ENCODE measurements at regions of chr1 and their contacts with region 1.

Region 1: DNA sequence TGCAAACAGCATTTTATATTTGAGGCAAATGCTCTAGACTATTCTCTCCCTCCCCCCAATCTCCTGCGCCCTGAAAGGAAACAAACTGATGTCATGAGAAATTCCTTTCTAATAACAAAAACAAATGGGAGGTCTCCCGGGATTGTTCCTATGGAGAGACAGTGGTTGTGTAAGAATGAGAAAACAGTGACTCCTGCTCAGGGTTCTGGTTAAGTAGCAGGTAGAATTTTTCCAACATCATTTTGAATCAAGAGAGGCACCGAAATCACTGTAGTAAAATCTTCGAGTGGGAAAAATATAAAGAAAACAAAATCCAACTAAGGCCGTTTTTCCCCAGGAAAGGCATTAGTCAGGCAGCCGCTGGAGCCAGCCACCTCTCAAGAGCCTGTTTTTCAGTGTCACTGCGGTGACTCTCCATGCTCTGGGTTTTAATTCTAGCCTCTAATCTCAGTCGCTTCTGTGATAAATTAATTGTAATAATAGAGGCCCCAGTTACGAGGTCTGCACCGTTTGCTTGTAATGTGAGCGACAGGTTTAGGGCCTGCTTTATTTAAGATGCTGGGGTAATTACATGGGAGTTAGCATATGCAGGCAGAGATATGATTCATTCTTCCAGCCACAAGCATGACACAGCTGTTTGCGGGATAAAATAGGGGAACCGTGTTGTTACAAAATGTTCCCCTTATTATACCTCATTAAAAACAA is 80.3 kb downstream of the RNF220 start:
- DNase-seq: no peak

Region 2: DNA sequence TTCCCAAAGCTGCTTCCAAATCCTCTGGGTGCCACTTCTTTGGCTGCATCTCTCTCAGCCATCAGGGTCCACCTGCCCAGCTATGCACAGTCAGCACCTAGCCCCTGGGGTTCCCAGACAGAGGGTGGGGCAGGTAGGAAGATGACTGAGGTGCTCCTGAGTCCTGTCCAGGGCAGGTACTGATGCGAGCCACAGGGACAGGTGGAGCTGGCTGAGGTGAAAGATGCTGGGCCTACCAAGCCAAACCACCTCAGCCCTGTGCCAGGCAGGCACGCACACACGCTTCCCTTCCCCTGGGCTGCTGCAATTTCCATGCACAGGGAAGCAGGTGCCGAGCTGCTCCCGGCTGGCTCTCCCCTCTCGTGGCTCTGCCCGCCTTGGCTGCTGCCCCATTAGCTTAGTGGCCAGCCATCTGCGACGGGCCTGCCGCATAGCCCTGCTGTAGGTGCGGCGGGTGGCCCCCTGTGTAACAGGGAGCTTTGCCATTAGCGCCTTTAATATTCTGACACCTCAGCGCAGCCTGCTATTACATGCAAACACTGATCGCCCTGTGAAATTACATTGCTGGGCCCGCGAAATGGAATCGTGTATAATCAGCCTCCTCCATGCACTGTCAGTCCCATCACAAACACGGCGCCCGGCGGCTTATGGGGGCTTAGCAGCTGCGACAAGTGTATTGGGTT is 233.3 kb before region 1 on chr1:
- CTCF ChIA-PET with region 1: no interaction called
- POLR2A ChIA-PET with region 1: no interaction called
- DNase-seq: no peak

Region 3: DNA sequence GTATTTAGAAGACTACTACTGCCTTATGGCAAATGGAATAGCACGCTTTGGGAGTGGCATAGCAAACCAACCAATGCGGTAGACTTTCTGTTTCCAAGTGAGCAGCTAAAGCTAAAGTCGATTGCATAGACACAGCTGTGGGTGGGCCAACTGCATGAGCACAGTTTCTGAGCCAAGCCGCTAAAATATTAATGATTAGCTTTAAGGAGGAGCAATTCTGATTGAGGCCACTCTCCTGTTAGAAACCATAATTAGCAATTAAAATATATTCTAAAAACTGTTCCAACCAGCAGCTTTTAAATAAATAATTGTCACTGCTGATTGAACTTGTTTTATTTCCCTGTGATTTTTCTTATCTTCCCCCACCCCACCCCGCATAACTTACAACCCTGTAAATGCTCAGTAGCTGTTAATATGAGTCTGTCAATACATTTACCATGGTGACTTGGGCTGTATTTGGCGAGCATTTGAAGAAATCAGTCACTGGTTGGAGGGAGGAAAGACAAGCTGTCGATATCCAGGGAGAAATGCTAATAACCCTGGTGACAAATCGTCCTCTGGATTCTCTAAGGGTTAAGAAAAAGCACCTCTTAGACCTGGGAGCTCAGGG is 48.2 kb before region 1 on chr1:
- CTCF ChIA-PET with region 1: no interaction called
- POLR2A ChIA-PET with region 1: no interaction called
- DNase-seq: no peak

Region 4: GRCh38 chr1:44500181-44501046 is 15.0 kb after region 1 on chr1:
- CTCF ChIA-PET with region 1: interaction called, 10 read pairs
- POLR2A ChIA-PET with region 1: no interaction called
- DNase-seq: no peak

Measured in HEK293T (cell line).